ENCODE measurements at regions of chr7 and their contacts with region 1.

Region 1: DNA sequence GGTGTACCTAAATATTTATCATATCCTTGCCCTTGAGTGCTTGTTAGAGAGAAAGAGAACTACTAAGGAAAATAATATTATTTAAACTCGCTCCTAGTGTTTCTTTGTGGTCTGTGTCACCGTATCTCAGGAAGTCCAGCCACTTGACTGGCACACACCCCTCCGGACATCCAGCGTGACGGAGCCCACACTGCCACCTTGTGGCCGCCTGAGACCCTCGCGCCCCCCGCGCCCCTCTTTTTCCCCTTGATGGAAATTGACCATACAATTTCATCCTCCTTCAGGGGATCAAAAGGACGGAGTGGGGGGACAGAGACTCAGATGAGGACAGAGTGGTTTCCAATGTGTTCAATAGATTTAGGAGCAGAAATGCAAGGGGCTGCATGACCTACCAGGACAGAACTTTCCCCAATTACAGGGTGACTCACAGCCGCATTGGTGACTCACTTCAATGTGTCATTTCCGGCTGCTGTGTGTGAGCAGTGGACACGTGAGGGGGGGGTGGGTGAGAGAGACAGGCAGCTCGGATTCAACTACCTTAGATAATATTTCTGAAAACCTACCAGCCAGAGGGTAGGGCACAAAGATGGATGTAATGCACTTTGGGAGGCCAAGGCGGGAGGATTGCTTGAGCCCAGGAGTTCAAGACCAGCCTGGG is 11.4 kb downstream of the SERPINE1 start:
- DNase-seq: peak in 1 of 2 experiments; percentile 80
- H3K4me3 ChIP-seq: peak overlapping the region in 1 of 4 experiments; percentile 29; a peak in 2 of 8 replicates
- H3K27ac ChIP-seq: no peak overlapping the region
- H3K4me1 ChIP-seq: peaks cover 2 to 14% (median 6%) of the 10 kb centered on the region in 4 experiments; a peak in 6 of 7 replicates
- H3K27me3 ChIP-seq: peaks cover 0 to 2% (median 0%) of the 10 kb centered on the region in 4 experiments; a peak in 1 of 7 replicates
- CTCF ChIP-seq: peak; percentile 57 to 76 (median 64)
- EP300 ChIP-seq: no peak
- POLR2A ChIP-seq: no peak
- RAD21 ChIP-seq: peak; percentile 60 to 69

Region 2: DNA sequence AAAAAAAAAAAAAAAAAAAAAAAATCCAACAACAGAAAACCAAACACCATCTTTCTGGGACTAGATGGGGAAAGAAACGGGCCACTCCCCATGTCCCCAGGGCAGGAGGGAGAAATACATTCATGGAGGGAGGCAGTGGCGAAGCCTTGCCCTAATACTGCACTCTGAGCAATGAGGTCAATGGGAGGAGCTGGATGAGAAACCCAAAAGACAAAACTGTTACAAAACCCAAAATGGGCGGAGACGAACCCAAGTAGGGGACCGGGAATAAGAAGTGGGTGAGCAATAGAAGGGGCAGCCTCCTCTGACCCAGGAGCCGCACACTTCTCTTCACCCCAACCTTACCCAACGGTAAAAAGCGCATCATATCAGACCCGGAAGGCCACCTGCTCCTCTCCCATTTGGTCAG is 458.2 kb before region 1 on chr7:
- CTCF ChIA-PET with region 1: no interaction called
- POLR2A ChIA-PET with region 1: no interaction called
- DNase-seq: no peak
- H3K4me3 ChIP-seq: no peak overlapping the region
- H3K27ac ChIP-seq: no peak overlapping the region
- H3K4me1 ChIP-seq: peaks cover 0 to 7% (median 4%) of the 10 kb centered on the region in 4 experiments; a peak in 6 of 7 replicates
- H3K27me3 ChIP-seq: no peaks in the 10 kb centered on the region
- CTCF ChIP-seq: no peak
- EP300 ChIP-seq: no peak
- POLR2A ChIP-seq: peak in 1 of 2 experiments; percentile 40; a peak in 1 of 3 replicates
- RAD21 ChIP-seq: no peak

Region 3: GRCh38 chr7:101094416-101095375 is 43.6 kb before region 1 on chr7:
- CTCF ChIA-PET with region 1: interaction called, 25 read pairs
- POLR2A ChIA-PET with region 1: interaction called, 3 read pairs
- DNase-seq: peak; percentile 51 to 92
- H3K4me3 ChIP-seq: no peak overlapping the region
- H3K27ac ChIP-seq: no peak overlapping the region
- H3K4me1 ChIP-seq: peaks cover 0 to 6% (median 3%) of the 10 kb centered on the region in 4 experiments; a peak in 4 of 7 replicates
- H3K27me3 ChIP-seq: no peaks in the 10 kb centered on the region
- CTCF ChIP-seq: peak; percentile 73 to 78 (median 75)
- EP300 ChIP-seq: no peak
- POLR2A ChIP-seq: no peak
- RAD21 ChIP-seq: peak; percentile 67 to 75

Region 4: DNA sequence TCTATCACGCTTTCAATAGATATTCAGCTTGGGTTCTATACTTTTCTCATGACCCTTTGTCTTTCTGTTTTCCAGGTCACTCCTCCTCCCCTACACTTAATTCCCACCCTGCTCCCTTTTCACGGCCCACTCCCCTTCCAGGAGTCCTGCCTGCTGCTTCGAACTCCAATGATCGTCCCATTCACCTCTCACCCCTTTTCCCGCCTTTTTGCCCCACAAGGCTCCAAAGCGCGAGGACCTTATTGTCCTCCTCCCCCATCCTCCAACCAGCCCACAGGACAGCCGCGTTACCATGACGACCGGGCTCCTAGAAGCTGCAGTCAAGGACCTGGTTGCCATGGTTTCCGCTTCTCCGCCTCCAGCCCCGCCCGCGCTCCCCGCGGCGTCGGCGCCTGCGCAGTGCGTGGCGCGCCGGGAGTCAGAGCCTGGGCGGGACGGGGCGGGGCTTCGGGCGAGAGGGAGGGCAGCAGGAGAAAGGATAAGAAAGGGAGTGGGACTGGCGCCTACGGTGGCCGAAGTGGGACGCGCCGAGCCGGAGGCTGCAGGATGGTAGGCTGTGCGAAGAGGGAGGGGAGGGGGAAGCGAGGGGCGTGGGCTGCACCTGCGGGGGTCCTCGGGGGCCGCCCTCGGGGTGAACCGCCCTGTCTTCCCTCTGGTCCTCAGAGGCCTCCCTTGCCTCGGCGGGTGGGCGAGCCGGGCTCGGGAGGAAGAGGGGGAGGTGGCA is 15.8 kb after region 1 on chr7 and contains the start of gene AP1S1:
- CTCF ChIA-PET with region 1: interaction called, 115 read pairs
- POLR2A ChIA-PET with region 1: interaction called, 3 read pairs
- DNase-seq: peak; percentile 98
- H3K4me3 ChIP-seq: peak within 1 kb of the TSS; percentile 48 to 82 (median 66)
- H3K27ac ChIP-seq: peak within 1 kb of the TSS; percentile 16; the same call in 1 of the 2 replicates
- H3K4me1 ChIP-seq: peaks cover 8 to 19% (median 14%) of the 10 kb centered on the region in 4 experiments
- H3K27me3 ChIP-seq: peaks cover 0 to 6% (median 4%) of the 10 kb centered on the region in 4 experiments; a peak in 3 of 7 replicates
- CTCF ChIP-seq: no peak
- EP300 ChIP-seq: no peak
- POLR2A ChIP-seq: no peak
- RAD21 ChIP-seq: no peak
- total RNA-seq, gene AP1S1: 56.0 and 56.1 TPM in 2 replicates

Region 5: GRCh38 chr7:101185258-101185839 is 47.0 kb after region 1 on chr7:
- CTCF ChIA-PET with region 1: interaction called, 168 read pairs
- POLR2A ChIA-PET with region 1: no interaction called
- DNase-seq: no peak
- H3K4me3 ChIP-seq: no peak overlapping the region
- H3K27ac ChIP-seq: no peak overlapping the region
- H3K4me1 ChIP-seq: peaks cover 0 to 5% (median 3%) of the 10 kb centered on the region in 4 experiments; a peak in 6 of 7 replicates
- H3K27me3 ChIP-seq: peaks cover 6 to 10% (median 8%) of the 10 kb centered on the region in 4 experiments; a peak in 6 of 7 replicates
- CTCF ChIP-seq: no peak
- EP300 ChIP-seq: no peak
- POLR2A ChIP-seq: no peak
- RAD21 ChIP-seq: no peak

Region 6: DNA sequence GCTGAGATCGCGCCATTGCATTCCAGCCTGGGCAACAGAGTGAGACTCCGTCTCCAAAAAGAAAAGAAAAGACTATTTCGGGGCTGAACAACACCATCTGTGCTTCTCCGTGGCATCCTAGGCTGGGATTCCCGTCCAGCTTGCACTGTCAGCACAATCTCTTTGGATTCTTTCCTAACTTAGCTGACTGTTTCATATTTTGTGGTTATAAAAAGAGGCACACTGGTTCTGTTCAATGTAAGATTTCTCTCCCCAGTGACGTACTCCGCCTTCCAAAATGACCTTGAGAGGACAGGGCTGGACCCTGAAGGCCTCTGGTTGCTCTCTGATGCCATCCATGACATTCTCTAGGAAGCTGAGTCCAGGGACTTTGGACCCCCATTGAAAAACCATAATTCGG is 88.4 kb after region 1 on chr7:
- CTCF ChIA-PET with region 1: no interaction called
- POLR2A ChIA-PET with region 1: no interaction called
- DNase-seq: no peak
- H3K4me3 ChIP-seq: no peak overlapping the region
- H3K27ac ChIP-seq: no peak overlapping the region
- H3K4me1 ChIP-seq: peaks cover 0 to 11% (median 1%) of the 10 kb centered on the region in 4 experiments; a peak in 4 of 7 replicates
- H3K27me3 ChIP-seq: no peaks in the 10 kb centered on the region
- CTCF ChIP-seq: no peak
- EP300 ChIP-seq: no peak
- POLR2A ChIP-seq: no peak
- RAD21 ChIP-seq: no peak

Region 7: DNA sequence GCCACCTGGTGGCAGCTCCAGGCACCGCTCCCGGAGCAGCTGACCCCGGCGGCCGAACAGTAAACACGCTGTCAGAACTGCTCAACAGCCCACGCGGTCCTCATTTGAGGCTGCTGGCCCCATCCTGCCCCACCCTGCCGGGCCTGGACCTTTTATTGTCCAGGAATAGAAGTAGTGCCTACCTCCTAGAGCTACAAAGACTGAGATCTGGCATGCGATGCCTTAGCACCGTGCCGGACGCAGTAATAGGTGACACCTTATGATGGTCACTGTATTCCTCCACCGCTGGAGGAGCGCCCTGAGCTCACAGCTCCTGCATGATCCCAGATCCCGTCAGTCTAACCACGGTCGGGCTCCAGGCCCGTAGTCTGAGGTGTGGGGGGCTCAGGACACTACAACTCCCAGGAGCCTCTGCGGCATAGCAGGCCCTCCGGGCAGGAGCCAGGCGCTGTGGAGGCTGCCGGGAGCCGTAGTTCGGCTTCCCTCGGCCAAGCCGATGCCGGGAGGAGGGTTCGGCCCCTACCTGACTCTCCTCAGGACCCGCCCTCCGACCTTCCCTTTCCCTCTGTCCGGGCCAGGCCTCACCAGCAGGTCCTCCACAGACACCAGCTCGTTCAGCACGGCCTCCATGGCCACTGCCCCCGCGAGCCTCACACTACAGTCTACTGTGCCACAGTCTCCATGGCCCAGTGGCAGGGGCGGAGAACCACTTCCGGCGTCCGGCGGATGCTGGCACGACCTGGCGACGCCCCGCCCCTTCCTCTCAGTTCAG is 106.2 kb after region 1 on chr7 and contains the start of gene FIS1:
- CTCF ChIA-PET with region 1: interaction called, 23 read pairs
- POLR2A ChIA-PET with region 1: no interaction called
- DNase-seq: peak; percentile 76 to 98
- H3K4me3 ChIP-seq: peak within 1 kb of the TSS; percentile 80 to 99 (median 98)
- H3K27ac ChIP-seq: peak within 1 kb of the TSS; percentile 61; the same call in 1 of the 2 replicates
- H3K4me1 ChIP-seq: peaks cover 0 to 6% (median 3%) of the 10 kb centered on the region in 4 experiments; a peak in 5 of 7 replicates
- H3K27me3 ChIP-seq: no peaks in the 10 kb centered on the region
- CTCF ChIP-seq: peak in 2 of 3 experiments; percentile 83 to 91; a peak in 3 of 4 replicates
- EP300 ChIP-seq: no peak
- POLR2A ChIP-seq: no peak
- RAD21 ChIP-seq: peak in 1 of 2 experiments; percentile 54; a peak in 3 of 4 replicates
- total RNA-seq, gene FIS1: 122 and 128 TPM in 2 replicates

Measured in H1 (cell line).